T-cell (primary cell): ENCODE measurements at regions of chr16 and their contacts with region 1.

Region 1: GRCh38 chr16:28218104-28218503 is 6.3 kb upstream of the XPO6 start:
- DNase-seq: peak; percentile 36 to 87 (median 62)
- ATAC-seq: peak; percentile 98 to 100 (median 100)
- H3K4me3 ChIP-seq: no peak overlapping the region
- H3K4me3 Mint-ChIP-seq: no peak overlapping the region
- H3K27ac ChIP-seq: no peak overlapping the region
- H3K27ac Mint-ChIP-seq: peak overlapping the region in 1 of 2 donors; percentile 77
- H3K4me1 ChIP-seq: peaks cover 0 to 10% of the 10 kb centered on the region in 2 experiments
- H3K4me1 Mint-ChIP-seq: peaks cover 0 to 6% (median 2%) of the 10 kb centered on the region in 3 donors
- H3K27me3 ChIP-seq: no peaks in the 10 kb centered on the region
- H3K27me3 Mint-ChIP-seq: no peaks in the 10 kb centered on the region

Region 2: DNA sequence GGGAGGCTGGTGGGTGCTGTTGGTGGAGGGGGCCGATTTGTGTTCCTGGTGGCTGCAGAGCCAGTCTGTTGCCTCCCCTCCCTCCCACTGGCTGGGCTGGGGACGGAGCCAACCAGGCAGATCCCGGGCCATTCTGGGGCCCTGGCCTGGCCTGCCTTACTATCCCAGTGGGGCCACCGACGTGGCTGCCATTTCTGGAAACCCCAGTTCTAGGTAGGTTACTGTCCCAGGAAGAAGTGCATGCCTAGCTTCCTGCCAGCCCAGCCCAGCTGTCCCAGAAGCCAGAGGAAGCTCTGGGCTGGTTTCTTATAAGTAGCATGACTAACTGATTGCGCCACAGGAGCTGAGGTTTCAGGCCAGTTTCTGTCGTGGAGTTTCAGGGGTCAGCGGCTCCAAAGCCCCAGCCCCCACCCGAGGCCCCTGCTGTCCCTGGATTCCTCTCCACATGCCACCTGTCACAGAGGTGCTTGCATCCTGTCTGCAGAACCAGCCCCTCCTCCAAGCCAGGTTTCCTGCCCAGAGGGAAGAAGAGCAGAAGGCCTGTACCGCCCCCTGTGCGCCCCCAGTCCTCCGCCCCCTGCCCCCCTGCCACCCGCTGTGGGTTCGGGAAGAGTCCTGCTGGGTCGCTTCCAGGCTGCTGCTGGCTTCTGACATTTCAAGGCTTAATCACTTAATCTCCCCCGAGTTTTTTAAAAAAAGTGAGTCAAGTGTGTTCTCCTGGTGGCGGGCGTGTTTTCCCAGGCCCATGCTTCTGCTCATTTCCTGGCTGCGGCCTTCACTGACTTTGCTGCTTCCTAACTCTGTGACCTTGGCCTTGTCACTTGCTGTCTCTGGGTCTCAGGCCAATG is 891.1 kb before region 1 on chr16:
- CTCF ChIA-PET with region 1: no interaction called
- POLR2A ChIA-PET with region 1: no interaction called
- DNase-seq: peak in 28 of 35 experiments; percentile 20 to 57 (median 36)
- ATAC-seq: peak; percentile 70 to 79 (median 74)
- H3K4me3 ChIP-seq: peak overlapping the region in 1 of 2 donors; percentile 35
- H3K4me3 Mint-ChIP-seq: peak overlapping the region; percentile 28 to 70 (median 51)
- H3K27ac ChIP-seq: peak overlapping the region; percentile 19
- H3K27ac Mint-ChIP-seq: peak overlapping the region; percentile 82 to 89
- H3K4me1 ChIP-seq: peaks cover 9 to 79% of the 10 kb centered on the region in 2 experiments
- H3K4me1 Mint-ChIP-seq: peaks cover 77 to 93% (median 84%) of the 10 kb centered on the region in 3 donors
- H3K27me3 ChIP-seq: no peaks in the 10 kb centered on the region
- H3K27me3 Mint-ChIP-seq: no peaks in the 10 kb centered on the region

Region 3: DNA sequence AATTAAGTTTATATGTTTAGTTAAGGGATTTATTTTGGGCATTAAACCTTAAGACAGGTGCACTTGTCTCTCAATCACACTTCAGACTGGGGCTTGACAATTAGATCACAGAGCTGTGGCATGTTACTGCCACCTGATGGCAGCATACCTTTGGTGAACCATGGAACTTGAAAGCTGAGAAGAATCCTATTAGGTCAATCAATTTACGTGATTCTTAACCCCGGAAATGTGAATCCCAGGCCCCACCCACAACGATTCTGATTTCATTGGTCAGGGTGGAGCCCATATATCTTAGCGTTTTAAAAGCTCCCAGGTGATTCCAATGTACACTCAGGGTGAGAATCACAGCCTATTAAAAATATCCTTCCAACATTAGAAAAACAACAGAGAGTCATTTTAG is 245.6 kb before region 1 on chr16:
- CTCF ChIA-PET with region 1: interaction called in 1 of 2 experiments, 12 read pairs
- POLR2A ChIA-PET with region 1: no interaction called
- DNase-seq: peak in 26 of 35 experiments; percentile 4 to 64 (median 12)
- ATAC-seq: peak; percentile 48 to 76 (median 60)
- H3K4me3 ChIP-seq: no peak overlapping the region
- H3K4me3 Mint-ChIP-seq: no peak overlapping the region
- H3K27ac ChIP-seq: no peak overlapping the region
- H3K27ac Mint-ChIP-seq: no peak overlapping the region
- H3K4me1 ChIP-seq: peaks cover 0 to 5% of the 10 kb centered on the region in 2 experiments
- H3K4me1 Mint-ChIP-seq: peaks cover 0 to 5% (median 3%) of the 10 kb centered on the region in 3 donors
- H3K27me3 ChIP-seq: peaks cover 0 to 24% of the 10 kb centered on the region in 2 experiments
- H3K27me3 Mint-ChIP-seq: peaks cover 17 to 22% of the 10 kb centered on the region in 2 donors

Region 4: DNA sequence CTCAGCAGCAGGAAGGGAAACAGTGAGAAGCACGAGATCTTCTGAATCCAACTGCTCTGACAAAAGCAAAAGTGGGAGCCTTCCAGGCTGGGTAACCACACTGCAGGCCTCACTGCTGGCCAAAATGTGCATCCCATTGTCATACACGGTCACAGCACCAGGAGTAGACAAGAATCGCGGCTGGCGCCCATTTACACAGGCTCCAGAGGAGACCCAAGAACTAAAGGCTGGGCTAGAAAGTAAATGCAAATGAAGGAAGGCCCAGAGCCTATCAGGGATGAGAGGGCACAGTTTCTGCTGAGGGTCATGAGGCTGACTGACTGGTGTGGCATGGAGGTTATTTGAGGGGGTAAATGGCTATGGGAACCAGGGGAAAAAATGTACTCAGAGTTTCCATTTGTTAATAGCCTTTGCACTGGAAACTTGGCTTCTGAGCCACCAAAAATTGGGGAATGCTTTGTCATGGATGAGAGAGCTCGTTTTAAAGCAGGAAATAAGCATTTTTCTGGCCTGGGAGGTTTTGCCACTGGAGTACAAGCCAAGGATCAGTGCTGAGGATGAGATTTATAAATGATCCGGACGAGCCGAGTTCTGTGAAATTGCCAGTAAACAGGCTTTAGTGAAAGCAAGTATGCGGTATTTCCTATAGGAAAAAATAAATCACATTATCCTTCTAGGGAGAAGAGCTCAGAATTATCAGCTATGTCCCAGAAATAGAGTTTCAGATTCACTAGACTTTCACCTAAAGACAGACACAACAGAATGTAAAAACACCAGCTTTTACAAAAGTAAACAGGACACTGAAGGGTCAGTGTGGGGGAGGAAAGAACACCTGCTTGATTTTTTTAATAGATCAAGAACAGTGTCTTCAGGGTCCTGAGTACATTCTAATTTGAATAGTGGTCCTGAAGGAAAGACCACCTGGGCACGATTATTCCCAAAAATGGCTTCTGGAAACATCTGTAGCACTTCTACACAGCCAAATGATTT is 87.7 kb before region 1 on chr16:
- CTCF ChIA-PET with region 1: interaction called, 25 to 31 read pairs
- POLR2A ChIA-PET with region 1: no interaction called
- DNase-seq: no peak
- ATAC-seq: peak in 1 of 4 experiments; percentile 18
- H3K4me3 ChIP-seq: no peak overlapping the region
- H3K4me3 Mint-ChIP-seq: no peak overlapping the region
- H3K27ac ChIP-seq: no peak overlapping the region
- H3K27ac Mint-ChIP-seq: peak overlapping the region; percentile 17 to 76
- H3K4me1 ChIP-seq: peaks cover 0 to 5% of the 10 kb centered on the region in 2 experiments
- H3K4me1 Mint-ChIP-seq: peaks cover 12 to 30% (median 14%) of the 10 kb centered on the region in 3 donors
- H3K27me3 ChIP-seq: no peaks in the 10 kb centered on the region
- H3K27me3 Mint-ChIP-seq: no peaks in the 10 kb centered on the region

Region 5: GRCh38 chr16:28164140-28164539 is 54.0 kb before region 1 on chr16:
- CTCF ChIA-PET with region 1: interaction called, 4 to 11 read pairs
- POLR2A ChIA-PET with region 1: no interaction called
- DNase-seq: no peak
- ATAC-seq: no peak
- H3K4me3 ChIP-seq: no peak overlapping the region
- H3K4me3 Mint-ChIP-seq: peak overlapping the region in 1 of 3 donors; percentile 4
- H3K27ac ChIP-seq: peak overlapping the region; percentile 31
- H3K27ac Mint-ChIP-seq: peak overlapping the region; percentile 87 to 88
- H3K4me1 ChIP-seq: peaks cover 29 to 44% of the 10 kb centered on the region in 2 experiments
- H3K4me1 Mint-ChIP-seq: peaks cover 79 to 91% (median 88%) of the 10 kb centered on the region in 3 donors
- H3K27me3 ChIP-seq: no peaks in the 10 kb centered on the region
- H3K27me3 Mint-ChIP-seq: no peaks in the 10 kb centered on the region

Region 6: GRCh38 chr16:28193530-28194423 is 24.3 kb before region 1 on chr16:
- CTCF ChIA-PET with region 1: interaction called, 5 to 16 read pairs
- POLR2A ChIA-PET with region 1: interaction called in 1 of 2 experiments, 3 read pairs
- DNase-seq: peak in 6 of 35 experiments; percentile 11 to 65 (median 30)
- ATAC-seq: peak; percentile 34 to 50 (median 38)
- H3K4me3 ChIP-seq: peak overlapping the region; percentile 39 to 56
- H3K4me3 Mint-ChIP-seq: peak overlapping the region; percentile 62 to 75 (median 74)
- H3K27ac ChIP-seq: peak overlapping the region; percentile 86
- H3K27ac Mint-ChIP-seq: peak overlapping the region; percentile 96 to 98
- H3K4me1 ChIP-seq: peaks cover 53 to 59% of the 10 kb centered on the region in 2 experiments
- H3K4me1 Mint-ChIP-seq: peaks cover 79 to 86% (median 85%) of the 10 kb centered on the region in 3 donors
- H3K27me3 ChIP-seq: no peaks in the 10 kb centered on the region
- H3K27me3 Mint-ChIP-seq: no peaks in the 10 kb centered on the region

Region 7: GRCh38 chr16:28572696-28573510 is 354.8 kb after region 1 on chr16:
- CTCF ChIA-PET with region 1: no interaction called
- POLR2A ChIA-PET with region 1: no interaction called
- DNase-seq: no peak
- ATAC-seq: no peak
- H3K4me3 ChIP-seq: no peak overlapping the region
- H3K4me3 Mint-ChIP-seq: no peak overlapping the region
- H3K27ac ChIP-seq: no peak overlapping the region
- H3K27ac Mint-ChIP-seq: no peak overlapping the region
- H3K4me1 ChIP-seq: no peaks in the 10 kb centered on the region
- H3K4me1 Mint-ChIP-seq: peaks cover 31 to 45% (median 41%) of the 10 kb centered on the region in 3 donors
- H3K27me3 ChIP-seq: no peaks in the 10 kb centered on the region
- H3K27me3 Mint-ChIP-seq: no peaks in the 10 kb centered on the region